ENCODE measurements at regions of chr7 and their contacts with region 1.

Region 1: DNA sequence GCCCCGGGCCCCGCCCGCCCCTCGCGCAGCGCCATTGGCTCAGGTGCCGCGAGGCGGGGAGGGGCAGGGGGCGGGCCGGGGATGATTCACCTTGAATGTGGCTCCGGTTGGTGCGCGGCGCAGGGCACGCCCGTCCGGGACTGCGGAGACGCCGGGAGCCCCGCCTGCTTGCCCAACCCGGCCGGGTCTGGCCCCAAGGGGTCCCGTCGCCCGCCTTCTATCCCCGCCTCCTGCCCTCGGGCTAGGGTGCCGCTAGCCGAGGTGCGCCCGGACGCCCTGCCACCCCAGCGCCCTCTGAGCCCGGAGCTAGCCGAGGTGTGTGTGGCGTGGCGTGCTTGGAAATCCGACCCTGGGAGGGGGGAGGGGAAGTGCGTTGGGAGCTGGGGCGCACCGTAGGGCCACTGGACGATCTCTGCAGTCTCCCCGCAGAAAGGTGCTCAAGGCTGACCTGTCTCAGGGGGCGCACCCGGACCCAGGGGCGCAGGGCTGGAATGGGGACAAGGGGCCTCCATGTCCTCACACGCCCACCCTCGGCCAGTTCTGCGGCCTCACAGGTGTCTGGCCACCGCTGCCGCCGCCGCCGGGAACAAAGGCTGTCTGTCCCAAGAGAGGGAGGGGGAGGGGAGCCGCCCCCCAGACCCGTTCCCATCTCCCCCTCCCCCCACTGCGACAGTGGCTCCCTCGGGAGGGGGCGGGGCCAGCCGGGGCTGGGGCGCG is 168.9 kb downstream of the NRF1 start:
- DNase-seq: peak; percentile 62
- ATAC-seq: peak; percentile 79
- H3K4me3 Mint-ChIP-seq: peak overlapping the region; percentile 71
- H3K27ac Mint-ChIP-seq: no peak overlapping the region
- H3K4me1 Mint-ChIP-seq: peaks cover 38% of the 10 kb centered on the region
- H3K27me3 Mint-ChIP-seq: peaks cover 41% of the 10 kb centered on the region
- CTCF ChIP-seq: no peak

Region 2: GRCh38 chr7:129433847-129434674 is 346.4 kb before region 1 on chr7 and contains the start of gene STRIP2:
- CTCF ChIA-PET with region 1: no interaction called
- POLR2A ChIA-PET with region 1: no interaction called
- intact Hi-C with region 1: loop called (anchors 5 kb)
- DNase-seq: peak; percentile 90
- ATAC-seq: peak; percentile 98
- H3K4me3 Mint-ChIP-seq: peak within 1 kb of the TSS; percentile 91
- H3K27ac Mint-ChIP-seq: peak within 1 kb of the TSS; percentile 41
- H3K4me1 Mint-ChIP-seq: peaks cover 14% of the 10 kb centered on the region
- H3K27me3 Mint-ChIP-seq: peaks cover 22% of the 10 kb centered on the region
- CTCF ChIP-seq: no peak
- total RNA-seq, gene STRIP2: 0.20 and 0.35 TPM in 2 replicates

Region 3: DNA sequence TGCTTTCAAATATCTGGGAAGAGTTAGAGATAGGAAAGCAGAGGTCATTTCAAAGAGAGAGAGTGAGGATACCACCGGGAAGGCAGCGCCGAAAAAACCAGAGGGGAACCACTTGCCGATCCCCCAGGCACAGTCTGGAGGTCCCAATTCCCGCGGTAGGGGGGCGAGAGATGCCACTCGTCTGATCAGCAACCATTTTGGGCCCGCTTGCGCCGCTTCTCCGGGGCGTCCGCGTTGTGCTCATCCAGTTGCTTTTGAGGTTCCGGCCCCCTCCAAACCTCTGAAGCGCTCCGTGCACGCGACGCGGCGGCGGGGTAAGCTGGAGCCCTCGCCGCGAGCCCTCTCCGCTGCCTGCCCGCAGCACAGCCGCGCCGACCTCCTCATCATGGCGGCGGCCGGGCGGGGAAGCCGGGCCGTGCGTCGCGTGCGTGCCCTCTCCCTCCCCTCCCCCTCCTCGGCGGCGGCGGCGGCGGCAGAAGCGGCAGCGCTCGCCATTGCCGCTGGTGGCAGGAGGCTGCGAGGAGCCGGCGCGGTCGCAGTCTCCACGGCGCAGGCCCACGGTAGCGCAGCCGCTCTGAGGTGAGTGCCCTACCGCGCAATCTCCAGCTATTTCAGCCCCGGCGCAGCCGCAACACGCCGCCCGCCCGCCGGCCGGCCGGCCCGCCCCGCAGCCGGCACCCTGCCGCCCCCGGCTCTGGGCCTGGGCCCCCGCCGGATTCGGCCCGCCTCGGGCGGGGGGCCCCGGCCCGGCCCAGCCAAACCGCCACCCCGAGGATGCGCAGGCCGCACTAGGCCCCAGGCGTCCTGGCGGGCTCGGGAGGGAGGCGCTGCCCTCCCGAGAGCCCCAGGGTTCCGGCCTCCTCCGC is 168.9 kb before region 1 on chr7 and contains the start of gene NRF1:
- CTCF ChIA-PET with region 1: no interaction called
- POLR2A ChIA-PET with region 1: no interaction called
- intact Hi-C with region 1: loop called (anchors 5 kb)
- DNase-seq: peak; percentile 95
- ATAC-seq: peak; percentile 89
- H3K4me3 Mint-ChIP-seq: peak within 1 kb of the TSS; percentile 91
- H3K27ac Mint-ChIP-seq: peak within 1 kb of the TSS; percentile 92
- H3K4me1 Mint-ChIP-seq: peaks cover 58% of the 10 kb centered on the region
- H3K27me3 Mint-ChIP-seq: no peaks in the 10 kb centered on the region
- CTCF ChIP-seq: no peak
- total RNA-seq, gene NRF1: 27.4 and 29.8 TPM in 2 replicates

Region 4: GRCh38 chr7:129804890-129805719 is 24.7 kb after region 1 on chr7:
- CTCF ChIA-PET with region 1: no interaction called
- POLR2A ChIA-PET with region 1: interaction called, 11 read pairs
- intact Hi-C with region 1: no loop called
- DNase-seq: no peak
- ATAC-seq: no peak
- H3K4me3 Mint-ChIP-seq: no peak overlapping the region
- H3K27ac Mint-ChIP-seq: no peak overlapping the region
- H3K4me1 Mint-ChIP-seq: no peaks in the 10 kb centered on the region
- H3K27me3 Mint-ChIP-seq: no peaks in the 10 kb centered on the region
- CTCF ChIP-seq: no peak

Region 5: DNA sequence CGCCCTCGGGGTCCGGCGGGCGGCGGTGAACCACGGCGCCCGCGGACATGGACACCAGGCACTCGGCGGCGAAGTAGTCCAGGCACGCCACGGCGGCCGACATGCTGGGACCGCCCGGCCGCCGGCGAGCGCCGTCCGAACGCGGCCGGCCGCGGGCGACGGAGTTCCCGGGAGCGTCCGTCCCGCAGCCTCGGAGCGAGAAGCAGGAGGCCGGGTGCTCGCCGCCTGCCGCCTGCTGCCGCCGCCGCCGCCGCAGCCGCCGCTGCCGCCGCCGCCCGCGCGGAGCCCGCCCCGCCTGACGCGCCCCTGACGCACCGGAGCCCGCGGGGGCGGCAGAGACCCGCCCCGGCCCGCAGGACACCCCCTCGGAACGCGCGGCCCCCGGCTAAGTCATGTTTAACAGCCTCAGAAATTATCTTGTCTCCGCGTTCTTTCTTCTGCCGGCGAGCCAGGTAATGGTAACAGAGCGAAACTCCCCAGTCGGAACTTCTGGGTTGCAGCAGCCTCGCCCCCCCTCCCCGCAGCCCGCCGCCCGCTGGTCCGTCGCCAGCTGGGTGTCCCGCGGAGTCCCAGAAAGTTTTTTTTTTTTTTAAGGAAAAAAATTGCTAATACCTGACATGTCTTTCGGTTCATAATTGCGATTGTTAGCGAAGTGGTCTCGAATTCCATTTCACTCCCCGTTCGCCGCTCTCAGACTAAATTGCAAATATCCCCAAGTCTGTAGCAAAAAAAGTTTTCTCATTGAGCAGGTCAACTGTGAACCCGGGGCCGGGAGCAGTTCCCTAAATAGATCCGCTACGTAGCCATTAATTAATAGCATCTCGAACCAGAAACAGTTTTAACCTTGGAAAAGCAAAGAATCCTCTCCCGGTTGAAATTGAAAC is 953.8 kb after region 1 on chr7 and contains the start of gene KLF14:
- CTCF ChIA-PET with region 1: no interaction called
- POLR2A ChIA-PET with region 1: no interaction called
- intact Hi-C with region 1: loop called (anchors 10 kb)
- DNase-seq: peak; percentile 58
- ATAC-seq: peak; percentile 69
- H3K4me3 Mint-ChIP-seq: peak within 1 kb of the TSS; percentile 86
- H3K27ac Mint-ChIP-seq: peak within 1 kb of the TSS; percentile 69
- H3K4me1 Mint-ChIP-seq: peaks cover 7% of the 10 kb centered on the region
- H3K27me3 Mint-ChIP-seq: peaks cover 59% of the 10 kb centered on the region
- CTCF ChIP-seq: no peak
- total RNA-seq, gene KLF14: 0.10 TPM in 1 of 2 replicates, not detected in the other

Measured in activated B cell treated with CpG ODN at 0.5 μM for 24 hours (primary cell).